ENCODE measurements at regions of chr22 and their contacts with region 1.

Region 1: DNA sequence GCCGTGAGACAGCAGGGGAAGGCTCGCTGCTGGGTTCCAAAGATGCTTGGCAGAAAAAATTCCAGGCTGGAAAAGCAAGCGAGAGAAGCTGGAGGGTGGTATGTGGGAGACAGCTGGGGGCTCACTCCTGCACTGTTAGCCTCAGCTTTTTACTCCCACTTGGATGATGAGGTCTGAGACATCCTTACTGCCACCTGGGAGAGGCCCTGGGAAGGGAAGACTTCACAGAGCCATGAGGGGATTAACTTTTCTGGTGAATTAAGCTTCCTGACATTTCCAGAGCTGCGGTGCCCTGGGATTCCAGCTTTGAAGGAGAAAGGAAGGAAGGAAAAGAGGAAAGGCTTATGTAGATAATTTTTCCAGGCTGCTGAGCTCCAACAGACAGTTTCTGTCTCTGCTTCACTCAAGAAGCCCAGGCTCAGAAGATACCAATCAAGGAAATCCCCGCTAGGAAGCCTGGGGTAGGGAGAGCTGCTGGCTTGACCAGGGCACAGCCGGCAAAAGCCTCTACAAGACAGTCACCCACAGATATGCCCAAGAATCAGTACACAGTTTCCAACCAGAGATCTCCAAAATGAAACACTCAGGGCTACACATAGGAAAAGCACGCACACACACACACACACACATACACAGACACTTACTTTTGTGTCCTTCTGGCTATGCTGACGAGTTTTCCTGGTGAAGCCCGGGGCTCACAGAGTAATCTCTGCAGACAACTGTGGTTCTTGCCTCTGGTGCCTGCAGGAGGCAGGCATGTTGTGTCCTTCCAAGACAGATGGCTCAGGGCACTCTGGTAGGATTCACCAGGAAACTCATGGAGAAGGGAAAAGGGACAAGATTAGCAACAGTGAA is 907 bp downstream of the MCHR1 start:
- DNase-seq: no peak
- H3K4me3 ChIP-seq: no peak overlapping the region
- H3K4me3 Mint-ChIP-seq: no peak overlapping the region
- H3K27ac ChIP-seq: no peak overlapping the region
- H3K27ac Mint-ChIP-seq: no peak overlapping the region
- H3K4me1 ChIP-seq: peaks cover 10% of the 10 kb centered on the region
- H3K4me1 Mint-ChIP-seq: peaks cover 6 to 19% (median 9%) of the 10 kb centered on the region in 4 donors
- H3K27me3 ChIP-seq: peaks cover 6% of the 10 kb centered on the region
- H3K27me3 Mint-ChIP-seq: peaks cover 6 to 9% of the 10 kb centered on the region in 2 donors

Region 2: GRCh38 chr22:40645579-40646197 is 34.5 kb before region 1 on chr22:
- CTCF ChIA-PET with region 1: interaction called, 11 read pairs
- POLR2A ChIA-PET with region 1: interaction called, 4 read pairs
- intact Hi-C with region 1: no loop called
- DNase-seq: no peak
- H3K4me3 ChIP-seq: no peak overlapping the region
- H3K4me3 Mint-ChIP-seq: peak overlapping the region in 1 of 8 donors; percentile 65
- H3K27ac ChIP-seq: no peak overlapping the region
- H3K27ac Mint-ChIP-seq: peak overlapping the region in 1 of 7 donors; percentile 27
- H3K4me1 ChIP-seq: peaks cover 7% of the 10 kb centered on the region
- H3K4me1 Mint-ChIP-seq: peaks cover 6 to 12% (median 7%) of the 10 kb centered on the region in 4 donors
- H3K27me3 ChIP-seq: no peaks in the 10 kb centered on the region
- H3K27me3 Mint-ChIP-seq: no peaks in the 10 kb centered on the region

Region 3: GRCh38 chr22:40714192-40714951 is 34.2 kb after region 1 on chr22:
- CTCF ChIA-PET with region 1: interaction called, 22 read pairs
- POLR2A ChIA-PET with region 1: interaction called, 7 read pairs
- intact Hi-C with region 1: loop called (anchors 1 kb)
- DNase-seq: no peak
- H3K4me3 ChIP-seq: no peak overlapping the region
- H3K4me3 Mint-ChIP-seq: peak overlapping the region in 1 of 8 donors; percentile 12
- H3K27ac ChIP-seq: no peak overlapping the region
- H3K27ac Mint-ChIP-seq: peak overlapping the region in 1 of 7 donors; percentile 42
- H3K4me1 ChIP-seq: peaks cover 9% of the 10 kb centered on the region
- H3K4me1 Mint-ChIP-seq: peaks cover 10 to 16% (median 13%) of the 10 kb centered on the region in 4 donors
- H3K27me3 ChIP-seq: no peaks in the 10 kb centered on the region
- H3K27me3 Mint-ChIP-seq: no peaks in the 10 kb centered on the region

Region 4: GRCh38 chr22:40733916-40734315 is 53.7 kb after region 1 on chr22:
- CTCF ChIA-PET with region 1: interaction called, 14 read pairs
- POLR2A ChIA-PET with region 1: interaction called, 10 read pairs
- intact Hi-C with region 1: loop called (anchors 1 kb)
- DNase-seq: no peak
- H3K4me3 ChIP-seq: no peak overlapping the region
- H3K4me3 Mint-ChIP-seq: no peak overlapping the region
- H3K27ac ChIP-seq: no peak overlapping the region
- H3K27ac Mint-ChIP-seq: peak overlapping the region in 2 of 7 donors; percentile 3 to 27
- H3K4me1 ChIP-seq: peaks cover 40% of the 10 kb centered on the region
- H3K4me1 Mint-ChIP-seq: peaks cover 23 to 38% (median 29%) of the 10 kb centered on the region in 4 donors
- H3K27me3 ChIP-seq: no peaks in the 10 kb centered on the region
- H3K27me3 Mint-ChIP-seq: no peaks in the 10 kb centered on the region

Region 5: DNA sequence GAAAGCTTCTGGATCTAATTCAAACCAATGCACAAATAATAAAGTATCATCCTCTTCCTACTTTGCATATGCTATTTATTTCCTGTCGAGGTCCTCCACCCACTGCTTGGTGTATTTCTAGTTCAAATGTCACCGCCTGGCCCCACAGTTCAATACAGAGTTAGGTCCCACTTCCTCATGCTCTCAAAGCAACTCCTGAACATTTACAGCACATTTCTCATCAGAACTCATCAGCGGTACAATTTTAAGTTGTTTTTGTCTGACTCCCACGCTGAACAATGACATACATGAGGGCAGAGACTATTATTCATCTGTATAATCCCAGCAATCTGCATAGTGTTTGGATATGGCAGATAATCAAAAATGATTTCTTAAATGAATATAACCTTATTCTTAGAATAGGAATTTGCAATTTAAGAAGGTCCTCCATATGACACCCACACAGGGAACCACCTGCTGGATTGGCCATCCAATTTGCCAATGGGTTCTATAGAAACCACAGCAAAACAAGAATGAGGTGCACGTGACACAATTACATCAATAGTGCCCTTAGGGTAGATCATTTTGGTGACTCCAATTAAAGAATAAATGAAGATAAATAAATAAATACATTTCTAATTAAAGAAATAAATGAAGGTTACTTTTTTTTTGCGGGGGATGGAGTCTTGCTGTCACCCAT is 84.7 kb after region 1 on chr22:
- CTCF ChIA-PET with region 1: interaction called, 20 read pairs
- POLR2A ChIA-PET with region 1: interaction called, 63 read pairs
- intact Hi-C with region 1: loop called (anchors 1 kb)
- DNase-seq: peak in 4 of 5 donors; percentile 11 to 25 (median 17)
- H3K4me3 ChIP-seq: no peak overlapping the region
- H3K4me3 Mint-ChIP-seq: peak overlapping the region in 7 of 8 donors; percentile 10 to 77 (median 48)
- H3K27ac ChIP-seq: no peak overlapping the region
- H3K27ac Mint-ChIP-seq: peak overlapping the region; percentile 64 to 94 (median 88)
- H3K4me1 ChIP-seq: peaks cover 19% of the 10 kb centered on the region
- H3K4me1 Mint-ChIP-seq: peaks cover 11 to 19% (median 15%) of the 10 kb centered on the region in 4 donors
- H3K27me3 ChIP-seq: no peaks in the 10 kb centered on the region
- H3K27me3 Mint-ChIP-seq: no peaks in the 10 kb centered on the region

Region 6: GRCh38 chr22:40856513-40857308 is 176.5 kb after region 1 on chr22 and contains the starts of genes ST13 and XPNPEP3:
- CTCF ChIA-PET with region 1: interaction called, 4 read pairs
- POLR2A ChIA-PET with region 1: interaction called, 3 read pairs
- intact Hi-C with region 1: loop called (anchors 1 kb)
- DNase-seq: peak; percentile 97 to 98 (median 98)
- H3K4me3 ChIP-seq: peak within 1 kb of the TSS; percentile 72 to 100
- H3K4me3 Mint-ChIP-seq: peak within 1 kb of the TSS; percentile 96 to 99 (median 98)
- H3K27ac ChIP-seq: peak within 1 kb of the TSS; percentile 99
- H3K27ac Mint-ChIP-seq: peak within 1 kb of the TSS; percentile 98 to 100 (median 100)
- H3K4me1 ChIP-seq: peaks cover 53% of the 10 kb centered on the region
- H3K4me1 Mint-ChIP-seq: peaks cover 23 to 66% (median 45%) of the 10 kb centered on the region in 4 donors
- H3K27me3 ChIP-seq: no peaks in the 10 kb centered on the region
- H3K27me3 Mint-ChIP-seq: peaks cover 0 to 2% of the 10 kb centered on the region in 2 donors
- total RNA-seq, gene ST13: 161 to 168 TPM
- total RNA-seq, gene XPNPEP3: 18.6 to 20.0 TPM

Measured in CD4-positive, alpha-beta memory T cell (primary cell).